HEK293 (cell line): ENCODE measurements at regions of chr16 and their contacts with region 1.

Region 1: DNA sequence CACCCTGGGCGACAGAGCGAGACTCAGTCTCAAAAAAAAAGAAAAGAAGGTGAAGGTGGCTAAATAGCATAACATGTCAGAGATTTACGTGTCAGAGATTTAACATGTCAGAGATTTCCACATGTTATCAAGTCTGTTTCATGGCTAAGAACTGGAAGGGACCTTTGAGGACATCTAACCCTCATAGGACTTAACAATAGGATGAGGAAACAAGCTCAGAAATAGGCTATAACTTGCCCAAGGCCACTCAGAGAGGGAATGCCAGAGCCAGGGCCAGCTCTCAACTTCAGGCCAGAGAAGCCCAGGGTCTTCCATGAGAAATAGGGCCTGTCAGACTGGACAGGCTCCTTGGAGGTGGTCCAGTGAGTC is 26.8 kb upstream of the ZNF629 start:
- H3K4me3 ChIP-seq: peak overlapping the region; percentile 29
- H3K27ac ChIP-seq: peak overlapping the region; percentile 32; the same call in 1 of the 2 replicates
- H3K4me1 ChIP-seq: 0 out of 2 replicates have a peak, but pooled peaks cover 2% of the 10 kb centered on the region
- CTCF ChIP-seq: no peak

Region 2: GRCh38 chr16:30605158-30605557 is 208.6 kb before region 1 on chr16:
- CTCF ChIA-PET with region 1: no interaction called
- POLR2A ChIA-PET with region 1: no interaction called
- H3K4me3 ChIP-seq: no peak overlapping the region
- H3K27ac ChIP-seq: no peak overlapping the region
- H3K4me1 ChIP-seq: no peaks in the 10 kb centered on the region
- CTCF ChIP-seq: no peak

Region 3: GRCh38 chr16:30797670-30798309 is 16.0 kb before region 1 on chr16:
- CTCF ChIA-PET with region 1: interaction called, 30 read pairs
- POLR2A ChIA-PET with region 1: no interaction called
- H3K4me3 ChIP-seq: no peak overlapping the region
- H3K27ac ChIP-seq: no peak overlapping the region
- H3K4me1 ChIP-seq: no peaks in the 10 kb centered on the region
- CTCF ChIP-seq: peak; percentile 62

Region 4: GRCh38 chr16:30838876-30839471 is 25.2 kb after region 1 on chr16:
- CTCF ChIA-PET with region 1: interaction called, 11 read pairs
- POLR2A ChIA-PET with region 1: no interaction called
- H3K4me3 ChIP-seq: no peak overlapping the region
- H3K27ac ChIP-seq: no peak overlapping the region
- H3K4me1 ChIP-seq: no peaks in the 10 kb centered on the region
- CTCF ChIP-seq: no peak

Region 5: DNA sequence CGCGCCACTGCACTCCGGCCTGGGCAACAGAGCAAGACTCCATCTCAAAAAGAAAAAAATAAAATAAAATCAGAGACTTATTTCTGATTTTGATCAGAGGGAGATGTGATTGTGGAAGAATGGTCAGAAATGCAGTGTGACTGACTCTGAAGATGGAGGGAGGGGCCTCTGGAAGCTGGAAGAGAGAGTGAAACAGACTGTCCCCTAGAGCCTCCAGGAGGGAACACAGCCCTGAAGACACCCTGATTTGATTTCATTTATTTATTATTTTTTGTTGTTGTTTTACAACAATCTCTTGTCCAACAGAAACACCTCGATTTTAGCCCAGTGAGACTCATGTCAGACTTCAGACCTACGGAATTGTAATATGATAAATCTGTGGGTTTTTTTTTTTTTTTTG is 53.9 kb after region 1 on chr16:
- CTCF ChIA-PET with region 1: no interaction called
- POLR2A ChIA-PET with region 1: no interaction called
- H3K4me3 ChIP-seq: no peak overlapping the region
- H3K27ac ChIP-seq: no peak overlapping the region
- H3K4me1 ChIP-seq: no peaks in the 10 kb centered on the region
- CTCF ChIP-seq: no peak

Region 6: GRCh38 chr16:30902029-30902972 is 88.5 kb after region 1 on chr16:
- CTCF ChIA-PET with region 1: interaction called, 12 read pairs
- POLR2A ChIA-PET with region 1: interaction called, 3 read pairs
- H3K4me3 ChIP-seq: peak overlapping the region; percentile 51
- H3K27ac ChIP-seq: peak overlapping the region; percentile 77
- H3K4me1 ChIP-seq: no peaks in the 10 kb centered on the region
- CTCF ChIP-seq: peak; percentile 19; the same call in 1 of the 2 replicates